Left cardiac atrium (tissue), 4 donors: ENCODE measurements at regions of chr20 and their contacts with region 1.

Region 1: GRCh38 chr20:49610701-49611538 is 43.0 kb upstream of the PTGIS start:
- DNase-seq: peak; percentile 78
- ATAC-seq: peak; percentile 73 to 81

Region 2: DNA sequence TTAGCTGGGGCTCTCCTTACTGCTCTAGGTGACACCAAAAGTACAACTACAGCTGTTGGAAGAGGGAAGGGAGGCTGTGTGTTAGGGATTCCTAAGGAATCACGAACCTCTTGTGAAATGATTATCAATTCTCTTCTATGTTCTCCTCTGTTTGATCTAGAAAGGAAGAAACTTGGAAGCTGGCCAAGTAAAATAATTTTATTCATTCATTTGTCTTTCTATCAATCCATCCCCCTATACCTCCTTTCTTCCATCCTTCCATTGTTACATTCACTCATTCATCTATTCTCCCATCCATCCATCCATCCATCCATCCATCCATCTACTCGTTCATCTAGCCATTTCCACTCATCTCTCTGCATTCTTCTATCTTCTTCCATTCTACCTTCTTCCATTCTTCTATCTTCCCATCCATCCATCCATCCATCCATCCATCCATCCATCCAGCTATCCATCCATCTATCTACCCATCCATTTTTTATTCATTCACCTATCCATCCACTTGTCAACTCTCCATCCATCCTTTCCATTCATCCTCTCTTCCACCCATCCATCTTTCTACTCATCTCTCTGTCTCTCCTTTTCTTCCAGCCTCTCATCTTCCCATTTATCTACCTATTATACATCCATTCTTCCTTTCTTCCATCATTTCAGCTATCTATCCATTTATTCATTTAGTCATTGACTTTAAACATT is 280.2 kb before region 1 on chr20:
- intact Hi-C with region 1: loop called in 1 of 2 experiments (anchors 5 kb)
- DNase-seq: no peak
- ATAC-seq: no peak

Region 3: DNA sequence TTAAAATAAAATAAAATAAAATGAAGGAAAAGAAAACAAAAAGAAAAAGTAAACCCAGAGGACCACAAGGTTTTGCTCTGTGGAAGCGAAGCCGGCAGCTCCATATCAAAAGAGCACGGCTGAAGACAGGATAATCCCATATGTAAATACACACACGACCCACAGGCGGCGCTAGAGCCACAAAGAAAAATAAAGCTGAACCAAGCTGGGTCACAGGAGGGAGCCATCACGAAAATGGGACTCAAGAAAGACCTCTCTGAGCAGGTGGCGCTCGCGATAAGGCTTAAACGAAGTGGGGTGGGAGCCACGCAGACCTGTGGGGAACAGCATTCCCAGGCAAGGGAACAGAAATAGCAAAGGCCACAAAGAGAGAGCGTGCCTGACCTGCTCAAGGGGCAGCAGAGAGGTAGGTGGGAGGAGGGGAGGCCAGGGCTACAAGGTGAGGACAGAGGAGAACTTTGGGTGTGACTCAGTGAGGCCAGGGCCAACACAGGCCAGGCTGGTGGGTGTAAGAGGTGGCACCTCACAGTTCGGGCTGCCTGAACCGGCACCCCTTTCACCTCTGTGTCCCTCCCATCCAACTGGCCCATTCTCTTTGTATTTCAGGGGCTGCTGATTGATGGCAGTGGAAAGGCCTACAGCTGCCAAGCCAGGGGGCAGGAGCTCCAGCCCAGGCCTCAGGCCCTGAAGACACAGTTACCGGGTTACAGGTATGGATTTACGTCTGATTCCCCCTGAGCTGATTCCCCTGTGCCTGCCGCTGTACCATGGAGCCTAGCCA is 69.0 kb before region 1 on chr20:
- intact Hi-C with region 1: loop called (anchors 2 to 5 kb)
- DNase-seq: peak; percentile 65
- ATAC-seq: peak; percentile 51 to 76

Region 4: GRCh38 chr20:49812463-49813304 is 201.8 kb after region 1 on chr20 and contains the start of gene SLC9A8:
- intact Hi-C with region 1: loop called (anchors 10 kb)
- DNase-seq: peak; percentile 93
- ATAC-seq: peak; percentile 94 to 98
- total RNA-seq, gene SLC9A8: 6.4 to 6.5 TPM

Region 5: GRCh38 chr20:49846206-49846807 is 235.4 kb after region 1 on chr20:
- intact Hi-C with region 1: loop called in 1 of 2 experiments (anchors 1 kb)
- DNase-seq: no peak
- ATAC-seq: peak; percentile 76 to 79

Region 6: GRCh38 chr20:49928401-49929141 is 317.7 kb after region 1 on chr20:
- intact Hi-C with region 1: loop called in 1 of 2 experiments (anchors 2 kb)
- DNase-seq: peak; percentile 80
- ATAC-seq: peak; percentile 86 to 89